Calu3 (cell line): ENCODE measurements at regions of chr3 and their contacts with region 1.

Region 1: DNA sequence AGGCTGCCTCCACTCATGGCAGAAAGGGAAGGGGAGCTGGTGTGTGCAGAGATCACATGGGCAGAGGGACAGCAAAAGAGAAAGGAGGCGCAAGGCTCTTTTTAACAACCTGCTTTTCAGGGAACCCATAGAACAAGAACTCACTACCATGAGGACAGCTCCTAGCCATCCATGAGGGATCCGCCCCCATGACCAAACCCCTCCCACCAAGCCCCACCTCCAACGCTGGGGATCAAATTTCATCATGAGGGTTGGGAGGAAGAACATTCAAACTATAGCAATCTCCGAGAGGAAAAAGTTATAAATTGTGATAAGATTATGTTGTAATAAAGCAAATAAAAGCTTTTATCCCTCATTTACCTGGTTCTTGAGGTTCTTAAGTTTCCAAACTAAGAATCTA is 84.7 kb upstream of the LMCD1 start:
- DNase-seq: peak; percentile 34
- H3K4me3 Mint-ChIP-seq: no peak overlapping the region
- H3K27ac Mint-ChIP-seq: no peak overlapping the region
- H3K4me1 Mint-ChIP-seq: no peaks in the 10 kb centered on the region
- H3K27me3 Mint-ChIP-seq: no peaks in the 10 kb centered on the region
- CTCF ChIP-seq: no peak

Region 2: GRCh38 chr3:8095724-8096123 is 321.2 kb before region 1 on chr3:
- CTCF ChIA-PET with region 1: no interaction called
- intact Hi-C with region 1: loop called (anchors 5 kb)
- DNase-seq: no peak
- H3K4me3 Mint-ChIP-seq: no peak overlapping the region
- H3K27ac Mint-ChIP-seq: no peak overlapping the region
- H3K4me1 Mint-ChIP-seq: no peaks in the 10 kb centered on the region
- H3K27me3 Mint-ChIP-seq: no peaks in the 10 kb centered on the region
- CTCF ChIP-seq: no peak

Region 3: GRCh38 chr3:8111069-8111798 is 305.7 kb before region 1 on chr3:
- CTCF ChIA-PET with region 1: interaction called, 6 read pairs
- intact Hi-C with region 1: loop called (anchors 5 kb)
- DNase-seq: peak; percentile 75
- H3K4me3 Mint-ChIP-seq: peak overlapping the region; percentile 39
- H3K27ac Mint-ChIP-seq: no peak overlapping the region
- H3K4me1 Mint-ChIP-seq: peaks cover 2% of the 10 kb centered on the region
- H3K27me3 Mint-ChIP-seq: no peaks in the 10 kb centered on the region
- CTCF ChIP-seq: peak; percentile 72

Region 4: DNA sequence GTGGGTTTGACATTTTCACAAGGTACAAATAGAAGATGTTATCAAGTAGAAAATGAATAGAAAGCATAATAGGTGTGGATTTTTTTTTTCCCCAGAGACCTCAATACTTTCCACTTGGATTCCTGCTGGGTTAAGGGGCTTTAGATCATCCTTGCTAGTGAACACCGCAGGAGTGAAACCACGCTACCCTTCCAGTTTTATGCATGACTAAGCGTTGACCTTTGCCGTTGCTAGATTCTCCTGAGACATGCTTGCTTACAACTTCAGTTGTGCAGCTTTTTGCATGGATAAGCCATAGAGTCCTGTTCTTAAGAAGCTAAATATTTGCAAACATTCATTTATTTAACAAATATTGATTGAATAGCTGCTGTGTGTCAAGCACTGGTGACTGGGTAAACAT is 215.1 kb before region 1 on chr3:
- CTCF ChIA-PET with region 1: no interaction called
- intact Hi-C with region 1: no loop called
- DNase-seq: no peak
- H3K4me3 Mint-ChIP-seq: no peak overlapping the region
- H3K27ac Mint-ChIP-seq: no peak overlapping the region
- H3K4me1 Mint-ChIP-seq: no peaks in the 10 kb centered on the region
- H3K27me3 Mint-ChIP-seq: no peaks in the 10 kb centered on the region
- CTCF ChIP-seq: no peak

Region 5: GRCh38 chr3:8239718-8240695 is 177.0 kb before region 1 on chr3:
- CTCF ChIA-PET with region 1: interaction called, 12 read pairs
- intact Hi-C with region 1: no loop called
- DNase-seq: peak; percentile 62
- H3K4me3 Mint-ChIP-seq: no peak overlapping the region
- H3K27ac Mint-ChIP-seq: no peak overlapping the region
- H3K4me1 Mint-ChIP-seq: no peaks in the 10 kb centered on the region
- H3K27me3 Mint-ChIP-seq: no peaks in the 10 kb centered on the region
- CTCF ChIP-seq: peak; percentile 36

Region 6: DNA sequence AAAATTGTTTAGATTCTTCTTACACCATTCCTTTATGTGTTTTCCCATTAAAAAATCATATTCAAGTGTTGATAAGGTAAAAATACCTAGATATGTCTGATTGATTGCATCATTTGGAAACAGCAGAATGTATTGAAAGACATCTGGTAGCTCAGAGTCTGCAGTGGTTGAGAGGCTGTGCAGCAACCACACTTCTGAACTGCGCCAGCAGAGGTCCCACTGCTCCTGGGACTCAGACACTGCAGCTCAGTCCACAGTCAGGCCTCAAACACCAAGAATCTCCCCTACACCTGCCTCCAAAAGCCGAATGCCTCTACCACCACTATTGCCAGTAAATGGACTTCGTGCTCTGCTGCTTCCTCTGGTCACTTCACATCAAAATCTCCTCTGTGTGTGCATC is 92.2 kb before region 1 on chr3:
- CTCF ChIA-PET with region 1: interaction called, 46 read pairs
- intact Hi-C with region 1: loop called (anchors 1 kb)
- DNase-seq: peak; percentile 62
- H3K4me3 Mint-ChIP-seq: no peak overlapping the region
- H3K27ac Mint-ChIP-seq: no peak overlapping the region
- H3K4me1 Mint-ChIP-seq: no peaks in the 10 kb centered on the region
- H3K27me3 Mint-ChIP-seq: no peaks in the 10 kb centered on the region
- CTCF ChIP-seq: no peak

Region 7: GRCh38 chr3:8622873-8623691 is 206.1 kb after region 1 on chr3:
- CTCF ChIA-PET with region 1: interaction called, 11 read pairs
- intact Hi-C with region 1: no loop called
- DNase-seq: peak; percentile 77
- H3K4me3 Mint-ChIP-seq: no peak overlapping the region
- H3K27ac Mint-ChIP-seq: no peak overlapping the region
- H3K4me1 Mint-ChIP-seq: peaks cover 25% of the 10 kb centered on the region
- H3K27me3 Mint-ChIP-seq: no peaks in the 10 kb centered on the region
- CTCF ChIP-seq: peak; percentile 85